Posterior vena cava (tissue), 2 donors: ENCODE measurements at regions of chr6 and their contacts with region 1.

Region 1: GRCh38 chr6:77440206-77440976 is 22.9 kb downstream of the HTR1B start:
- DNase-seq: no peak

Region 2: DNA sequence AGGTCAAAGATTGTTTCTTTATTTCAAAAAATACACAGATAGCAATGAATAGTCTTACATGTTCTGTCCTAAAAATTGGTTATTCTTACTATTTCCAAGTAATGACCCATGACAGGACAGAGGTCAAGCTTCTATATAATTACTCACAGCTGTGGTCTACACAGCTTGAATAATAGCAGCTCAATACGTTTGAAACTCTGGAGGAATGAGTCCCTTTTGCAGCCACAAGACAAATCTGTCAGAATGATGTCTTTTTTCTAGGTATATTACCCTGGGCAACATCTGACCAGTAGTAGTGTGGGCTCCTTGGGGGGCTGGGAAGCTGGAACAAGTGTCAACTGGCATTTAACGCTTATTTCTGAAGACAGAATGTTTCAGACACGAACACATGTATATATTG is 107.8 kb after region 1 on chr6:
- intact Hi-C with region 1: no loop called
- DNase-seq: no peak

Region 3: DNA sequence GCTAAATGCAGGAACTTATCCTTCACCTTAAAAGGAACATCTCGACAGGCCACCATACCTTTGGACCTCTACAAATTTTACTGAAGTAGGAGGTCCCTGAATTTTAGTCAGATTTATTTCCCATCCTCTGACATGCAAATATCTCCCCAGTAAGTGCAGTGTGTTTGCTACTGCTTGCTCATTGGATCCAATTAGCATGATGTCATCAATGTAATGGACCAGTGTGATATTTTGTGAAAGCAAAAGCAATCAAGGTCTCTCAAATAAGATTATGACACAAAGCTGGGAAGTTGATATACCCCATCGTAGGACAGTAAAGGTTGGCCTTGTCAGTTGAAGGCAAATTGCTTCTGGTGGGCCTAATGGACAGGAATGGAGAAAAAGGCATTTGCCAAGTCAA is 153.9 kb after region 1 on chr6:
- intact Hi-C with region 1: loop called in 1 of 2 experiments (anchors 5 kb)
- DNase-seq: no peak